Esophagus squamous epithelium (tissue), 5 donors: ENCODE measurements at regions of chr12 and their contacts with region 1.

Region 1: GRCh38 chr12:108856428-108857157 is 790 bp downstream of the SSH1 start:
- DNase-seq: no peak
- H3K4me3 ChIP-seq: peak overlapping the region; percentile 67 to 95 (median 80)
- H3K27ac ChIP-seq: peak overlapping the region; percentile 96 to 99 (median 98)
- H3K4me1 ChIP-seq: peaks cover 34 to 77% (median 43%) of the 10 kb centered on the region in 3 donors
- H3K27me3 ChIP-seq: no peaks in the 10 kb centered on the region
- CTCF ChIP-seq: no peak
- POLR2A ChIP-seq: peak in 2 of 4 donors; percentile 62 to 65

Region 2: GRCh38 chr12:108649669-108650068 is 206.9 kb before region 1 on chr12:
- intact Hi-C with region 1: no loop called
- DNase-seq: no peak
- H3K4me3 ChIP-seq: no peak overlapping the region
- H3K27ac ChIP-seq: peak overlapping the region in 3 of 4 donors; percentile 15 to 21 (median 16)
- H3K4me1 ChIP-seq: peaks cover 0 to 37% (median 6%) of the 10 kb centered on the region in 3 donors
- H3K27me3 ChIP-seq: no peaks in the 10 kb centered on the region
- CTCF ChIP-seq: no peak
- POLR2A ChIP-seq: no peak

Region 3: GRCh38 chr12:108720757-108721514 is 135.7 kb before region 1 on chr12:
- intact Hi-C with region 1: no loop called
- DNase-seq: no peak
- H3K4me3 ChIP-seq: no peak overlapping the region
- H3K27ac ChIP-seq: peak overlapping the region in 2 of 4 donors; percentile 75 to 79
- H3K4me1 ChIP-seq: peaks cover 22 to 88% (median 66%) of the 10 kb centered on the region in 3 donors
- H3K27me3 ChIP-seq: no peaks in the 10 kb centered on the region
- CTCF ChIP-seq: no peak
- POLR2A ChIP-seq: no peak

Region 4: GRCh38 chr12:108950991-108951739 is 94.6 kb after region 1 on chr12:
- intact Hi-C with region 1: loop called (anchors 5 kb)
- DNase-seq: no peak
- H3K4me3 ChIP-seq: peak overlapping the region in 1 of 4 donors; percentile 38
- H3K27ac ChIP-seq: peak overlapping the region in 2 of 4 donors; percentile 34 to 57
- H3K4me1 ChIP-seq: peaks cover 0 to 22% (median 6%) of the 10 kb centered on the region in 3 donors
- H3K27me3 ChIP-seq: peaks cover 0 to 5% (median 0%) of the 10 kb centered on the region in 4 donors
- CTCF ChIP-seq: peak; percentile 82 to 91 (median 89)
- POLR2A ChIP-seq: no peak